Activated CD4-positive, alpha-beta T cell treated with anti-CD3 and anti-CD28 coated beads for 36 hours (primary cell): ENCODE measurements at regions of chr19 and their contacts with region 1.

Region 1: GRCh38 chr19:45643024-45643926 is 4.1 kb upstream of the EML2 start:
- DNase-seq: peak; percentile 97
- ATAC-seq: peak; percentile 54
- H3K4me3 Mint-ChIP-seq: peak overlapping the region; percentile 94
- H3K27ac Mint-ChIP-seq: peak overlapping the region; percentile 93
- H3K4me1 Mint-ChIP-seq: peaks cover 57% of the 10 kb centered on the region
- H3K27me3 Mint-ChIP-seq: no peaks in the 10 kb centered on the region

Region 2: GRCh38 chr19:45469132-45469944 is 173.9 kb before region 1 on chr19:
- CTCF ChIA-PET with region 1: interaction called, 4 read pairs
- POLR2A ChIA-PET with region 1: interaction called, 5 read pairs
- intact Hi-C with region 1: loop called in 1 of 2 experiments (anchors 1 kb)
- DNase-seq: peak; percentile 97
- ATAC-seq: peak; percentile 82
- H3K4me3 Mint-ChIP-seq: peak overlapping the region; percentile 78
- H3K27ac Mint-ChIP-seq: peak overlapping the region; percentile 86
- H3K4me1 Mint-ChIP-seq: peaks cover 29% of the 10 kb centered on the region
- H3K27me3 Mint-ChIP-seq: peaks cover 11% of the 10 kb centered on the region

Region 3: DNA sequence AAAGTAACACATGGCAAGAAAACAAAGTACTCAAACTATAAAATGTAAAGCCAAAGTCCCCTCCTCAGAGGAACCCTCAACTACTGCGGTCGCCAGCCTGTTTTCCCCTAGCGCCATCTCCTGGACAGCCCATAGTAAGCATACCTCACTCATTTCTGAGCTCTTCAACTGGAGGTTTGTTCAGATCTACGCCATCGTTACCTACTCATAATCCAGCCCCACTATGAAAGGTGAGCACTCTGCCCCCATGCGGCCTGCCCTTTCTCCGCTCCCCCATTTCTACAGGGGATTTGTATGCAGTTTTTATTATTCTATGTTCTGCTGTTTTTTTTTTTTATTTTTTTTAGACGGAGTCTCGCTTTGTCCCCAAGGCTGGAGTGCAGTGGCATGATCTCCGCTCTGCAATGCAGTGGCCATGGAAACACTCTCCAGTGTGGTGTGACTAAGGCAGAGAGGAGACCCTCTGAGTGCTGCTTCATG is 84.8 kb before region 1 on chr19:
- CTCF ChIA-PET with region 1: interaction called, 7 read pairs
- POLR2A ChIA-PET with region 1: interaction called, 11 read pairs
- intact Hi-C with region 1: loop called in 1 of 2 experiments (anchors 1 kb)
- DNase-seq: peak; percentile 87
- ATAC-seq: peak; percentile 99
- H3K4me3 Mint-ChIP-seq: no peak overlapping the region
- H3K27ac Mint-ChIP-seq: peak overlapping the region; percentile 5
- H3K4me1 Mint-ChIP-seq: peaks cover 25% of the 10 kb centered on the region
- H3K27me3 Mint-ChIP-seq: no peaks in the 10 kb centered on the region

Region 4: DNA sequence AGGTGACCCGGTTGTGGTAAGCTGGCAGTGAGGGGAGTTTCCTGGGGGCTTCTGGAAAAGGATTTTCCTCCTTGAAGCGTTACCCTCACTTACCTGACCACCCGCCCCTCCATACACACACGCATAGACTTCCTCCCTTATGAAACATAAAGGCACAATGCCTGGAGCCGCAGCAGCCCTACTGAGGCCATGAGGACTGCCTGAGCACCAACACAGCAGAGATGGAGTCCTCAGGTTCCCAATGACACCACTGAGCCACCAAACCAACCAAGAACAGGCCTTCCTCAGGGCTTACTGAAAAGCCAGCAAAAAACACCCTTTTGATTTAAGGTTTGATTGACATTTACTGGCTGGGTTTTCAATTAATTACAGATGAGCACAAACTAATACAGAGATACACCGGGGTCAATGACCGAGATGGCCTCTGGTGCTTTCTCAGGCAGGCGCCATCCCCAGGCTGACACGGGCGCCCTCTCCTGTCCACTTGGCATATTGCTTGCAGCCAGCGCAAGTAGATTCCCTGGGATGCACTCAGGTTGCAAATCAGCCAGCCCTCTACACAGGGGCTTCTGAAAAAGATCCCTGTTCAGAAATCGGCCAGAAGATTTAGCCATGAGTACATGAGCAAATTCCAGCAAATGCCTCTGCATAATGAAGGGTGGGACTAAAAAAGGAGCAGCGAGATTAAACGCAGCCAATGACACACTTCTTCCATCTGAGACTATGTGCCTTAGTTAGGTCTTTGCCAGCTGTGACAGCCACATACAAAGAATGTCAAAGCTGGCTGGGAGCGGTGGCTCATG is 73.5 kb before region 1 on chr19:
- CTCF ChIA-PET with region 1: no interaction called
- POLR2A ChIA-PET with region 1: no interaction called
- intact Hi-C with region 1: no loop called
- DNase-seq: peak; percentile 84
- ATAC-seq: peak; percentile 87
- H3K4me3 Mint-ChIP-seq: no peak overlapping the region
- H3K27ac Mint-ChIP-seq: peak overlapping the region; percentile 49
- H3K4me1 Mint-ChIP-seq: peaks cover 4% of the 10 kb centered on the region
- H3K27me3 Mint-ChIP-seq: no peaks in the 10 kb centered on the region

Region 5: GRCh38 chr19:45615795-45616708 is 27.2 kb before region 1 on chr19:
- CTCF ChIA-PET with region 1: interaction called, 14 read pairs
- POLR2A ChIA-PET with region 1: interaction called, 9 read pairs
- intact Hi-C with region 1: loop called (anchors 1 kb)
- DNase-seq: peak; percentile 95
- ATAC-seq: peak; percentile 86
- H3K4me3 Mint-ChIP-seq: no peak overlapping the region
- H3K27ac Mint-ChIP-seq: peak overlapping the region; percentile 65
- H3K4me1 Mint-ChIP-seq: peaks cover 24% of the 10 kb centered on the region
- H3K27me3 Mint-ChIP-seq: no peaks in the 10 kb centered on the region

Region 6: GRCh38 chr19:45705115-45705514 is 61.8 kb after region 1 on chr19:
- CTCF ChIA-PET with region 1: interaction called, 4 read pairs
- POLR2A ChIA-PET with region 1: interaction called, 14 read pairs
- intact Hi-C with region 1: no loop called
- DNase-seq: no peak
- ATAC-seq: no peak
- H3K4me3 Mint-ChIP-seq: no peak overlapping the region
- H3K27ac Mint-ChIP-seq: no peak overlapping the region
- H3K4me1 Mint-ChIP-seq: no peaks in the 10 kb centered on the region
- H3K27me3 Mint-ChIP-seq: no peaks in the 10 kb centered on the region

Region 7: DNA sequence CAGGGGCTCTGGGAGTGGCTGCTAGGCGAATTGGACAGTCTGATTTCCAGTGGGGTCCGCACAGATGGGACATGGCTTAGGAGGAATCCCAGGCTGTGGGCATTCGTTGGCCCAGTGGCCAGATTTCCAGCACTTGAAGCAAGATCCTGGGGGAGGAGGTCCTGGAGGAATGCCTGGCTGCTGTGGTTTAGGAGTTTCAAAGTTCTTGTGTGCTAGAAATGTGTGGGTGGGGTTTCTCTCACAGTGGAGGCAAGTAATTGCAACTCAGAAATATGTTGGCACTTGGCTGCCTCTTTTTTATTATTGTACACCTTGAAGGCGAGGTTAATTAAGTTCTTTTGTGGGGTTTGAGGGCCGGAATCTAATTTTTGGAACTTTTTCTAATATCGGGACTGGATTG is 464.1 kb after region 1 on chr19:
- CTCF ChIA-PET with region 1: no interaction called
- POLR2A ChIA-PET with region 1: no interaction called
- intact Hi-C with region 1: no loop called
- DNase-seq: no peak
- ATAC-seq: no peak
- H3K4me3 Mint-ChIP-seq: no peak overlapping the region
- H3K27ac Mint-ChIP-seq: no peak overlapping the region
- H3K4me1 Mint-ChIP-seq: no peaks in the 10 kb centered on the region
- H3K27me3 Mint-ChIP-seq: peaks cover 15% of the 10 kb centered on the region